Endothelial cell of umbilical vein (primary cell): ENCODE measurements at regions of chr6 and their contacts with region 1.

Region 1: DNA sequence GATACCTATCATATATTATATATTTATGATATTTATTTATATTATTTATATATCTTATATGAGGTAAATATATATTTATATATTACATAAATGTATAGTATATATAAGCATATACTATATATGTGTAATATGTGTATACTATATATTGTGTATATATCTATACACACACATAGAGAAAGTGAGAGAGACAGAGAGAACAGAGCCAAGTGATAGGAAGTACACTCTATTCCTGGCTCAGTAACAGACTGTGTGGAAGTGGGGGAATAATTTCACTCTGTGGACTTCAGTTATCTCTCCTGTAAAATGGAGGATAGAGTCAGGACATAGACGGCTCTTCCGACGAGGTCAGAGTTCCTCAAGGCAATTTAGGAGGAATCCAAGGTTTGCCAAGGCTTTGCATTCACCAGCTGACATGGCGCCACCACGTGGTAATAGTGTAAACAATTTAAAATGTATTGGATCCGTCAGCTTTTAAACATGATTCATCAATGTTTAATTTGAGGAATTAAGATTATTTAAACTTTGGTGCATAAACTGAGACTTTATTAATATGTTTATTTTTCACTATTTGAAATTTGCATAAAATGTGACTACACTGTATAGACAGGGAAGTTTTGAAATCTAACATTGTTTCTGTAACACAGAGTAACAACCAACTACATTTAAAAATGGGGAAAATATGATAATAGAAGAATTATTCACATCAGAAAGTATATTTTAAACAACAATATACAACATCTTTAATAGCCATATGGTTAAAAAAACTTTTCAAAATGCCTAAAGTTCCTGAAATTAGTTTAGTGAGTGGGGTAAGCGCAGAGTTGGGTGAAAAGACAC is 75.4 kb upstream of the TMEM244 start:
- DNase-seq: peak; percentile 73
- H3K4me3 ChIP-seq: peak overlapping the region in 1 of 3 experiments; percentile 30
- H3K27ac ChIP-seq: no peak overlapping the region
- H3K4me1 ChIP-seq: peaks cover 2% of the 10 kb centered on the region
- H3K27me3 ChIP-seq: no peaks in the 10 kb centered on the region
- CTCF ChIP-seq: peak; percentile 39 to 56
- POLR2A ChIP-seq: no peak

Region 2: DNA sequence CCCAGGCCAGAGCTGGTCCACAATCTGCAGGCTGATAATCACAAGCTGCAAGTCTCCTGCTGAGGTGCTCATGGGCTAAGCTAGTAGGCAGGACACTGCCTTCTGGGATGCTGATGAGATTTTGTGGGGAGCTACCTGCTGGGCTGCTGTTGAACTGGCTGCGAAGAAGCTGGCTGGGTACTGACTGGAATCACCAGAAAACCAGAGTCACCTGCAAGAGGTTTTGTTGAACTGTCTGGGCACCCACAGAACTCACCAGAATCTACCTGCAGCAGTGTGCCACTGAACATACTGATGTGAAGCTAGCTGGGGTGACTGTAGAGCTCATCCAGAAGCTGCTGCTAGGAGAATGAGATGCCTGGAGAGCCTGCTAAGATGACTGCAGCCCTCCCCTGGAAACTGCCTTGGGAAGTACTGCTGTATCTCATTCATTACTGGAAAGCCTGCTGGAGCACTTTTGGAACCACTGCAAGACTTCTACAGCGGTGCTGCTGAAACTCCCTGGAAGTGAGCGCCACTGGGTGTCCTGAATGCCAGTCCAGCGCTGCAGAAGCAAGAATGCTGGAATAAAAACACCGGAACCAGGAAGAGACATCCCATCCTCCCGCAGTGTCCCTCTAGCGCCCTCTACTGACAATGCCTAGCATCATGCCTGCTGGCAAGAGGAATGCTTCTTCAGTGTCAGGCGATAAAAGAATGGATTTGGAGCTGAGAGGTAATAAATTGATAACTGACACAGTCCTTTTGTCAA is 161.7 kb before region 1 on chr6:
- CTCF ChIA-PET with region 1: interaction called, 10 read pairs
- POLR2A ChIA-PET with region 1: no interaction called
- dilution Hi-C with region 1: no loop called
- intact Hi-C with region 1: loop called (anchors 5 kb)
- DNase-seq: peak; percentile 76
- H3K4me3 ChIP-seq: no peak overlapping the region
- H3K27ac ChIP-seq: no peak overlapping the region
- H3K4me1 ChIP-seq: no peaks in the 10 kb centered on the region
- H3K27me3 ChIP-seq: no peaks in the 10 kb centered on the region
- CTCF ChIP-seq: peak; percentile 91 to 96
- POLR2A ChIP-seq: no peak

Region 3: DNA sequence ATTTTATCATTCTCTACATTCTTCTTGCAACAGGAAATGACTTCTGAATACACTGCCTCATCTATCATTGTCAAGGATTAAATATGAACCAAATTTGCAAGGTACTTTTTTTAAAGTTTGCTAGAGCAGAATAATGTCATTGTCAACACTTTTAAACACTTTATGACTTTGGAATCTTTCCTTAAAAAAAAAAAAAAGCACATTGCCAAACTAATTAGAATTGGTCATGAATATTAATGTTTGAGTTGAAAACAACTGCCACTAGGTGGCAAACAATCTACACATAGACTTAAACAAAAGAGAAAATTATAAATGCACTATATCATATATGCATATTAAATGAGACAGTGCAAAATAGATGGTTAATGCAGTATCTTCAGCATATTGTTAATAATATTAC is 42.9 kb before region 1 on chr6:
- CTCF ChIA-PET with region 1: interaction called, 6 read pairs
- POLR2A ChIA-PET with region 1: no interaction called
- dilution Hi-C with region 1: no loop called
- intact Hi-C with region 1: loop called (anchors 2 kb)
- DNase-seq: peak; percentile 58
- H3K4me3 ChIP-seq: no peak overlapping the region
- H3K27ac ChIP-seq: no peak overlapping the region
- H3K4me1 ChIP-seq: peaks cover 20% of the 10 kb centered on the region
- H3K27me3 ChIP-seq: no peaks in the 10 kb centered on the region
- CTCF ChIP-seq: peak; percentile 23 to 24
- POLR2A ChIP-seq: no peak

Region 4: GRCh38 chr6:129908356-129908755 is 28.2 kb before region 1 on chr6:
- CTCF ChIA-PET with region 1: no interaction called
- POLR2A ChIA-PET with region 1: no interaction called
- dilution Hi-C with region 1: no loop called
- intact Hi-C with region 1: no loop called
- DNase-seq: no peak
- H3K4me3 ChIP-seq: no peak overlapping the region
- H3K27ac ChIP-seq: no peak overlapping the region
- H3K4me1 ChIP-seq: no peaks in the 10 kb centered on the region
- H3K27me3 ChIP-seq: no peaks in the 10 kb centered on the region
- CTCF ChIP-seq: no peak
- POLR2A ChIP-seq: no peak

Region 5: GRCh38 chr6:130269969-130270635 is 333.6 kb after region 1 on chr6:
- CTCF ChIA-PET with region 1: no interaction called
- POLR2A ChIA-PET with region 1: no interaction called
- dilution Hi-C with region 1: no loop called
- intact Hi-C with region 1: no loop called
- DNase-seq: no peak
- H3K4me3 ChIP-seq: no peak overlapping the region
- H3K27ac ChIP-seq: no peak overlapping the region
- H3K4me1 ChIP-seq: no peaks in the 10 kb centered on the region
- H3K27me3 ChIP-seq: no peaks in the 10 kb centered on the region
- CTCF ChIP-seq: no peak
- POLR2A ChIP-seq: no peak